ENCODE measurements at regions of chr5 and their contacts with region 1.

Region 1: GRCh38 chr5:181207214-181208107 is 2.5 kb upstream of the TRIM7 start:
- DNase-seq: peak; percentile 82 to 86
- H3K4me3 ChIP-seq: peak overlapping the region; percentile 69
- H3K27ac ChIP-seq: peak overlapping the region; percentile 56
- H3K4me1 ChIP-seq: peaks cover 12% of the 10 kb centered on the region
- H3K27me3 ChIP-seq: no peaks in the 10 kb centered on the region
- CTCF ChIP-seq: no peak

Region 2: GRCh38 chr5:180810210-180810958 is 397.1 kb before region 1 on chr5:
- CTCF ChIA-PET with region 1: no interaction called
- POLR2A ChIA-PET with region 1: interaction called, 15 read pairs
- intact Hi-C with region 1: no loop called
- DNase-seq: peak; percentile 80 to 96
- H3K4me3 ChIP-seq: peak overlapping the region; percentile 95
- H3K27ac ChIP-seq: peak overlapping the region; percentile 91
- H3K4me1 ChIP-seq: peaks cover 55% of the 10 kb centered on the region
- H3K27me3 ChIP-seq: no peaks in the 10 kb centered on the region
- CTCF ChIP-seq: no peak

Region 3: GRCh38 chr5:181217803-181218062 is 10.3 kb after region 1 on chr5:
- CTCF ChIA-PET with region 1: interaction called, 13 read pairs
- POLR2A ChIA-PET with region 1: interaction called, 8 read pairs
- intact Hi-C with region 1: loop called (anchors 1 kb)
- DNase-seq: peak in 1 of 2 experiments; percentile 54
- H3K4me3 ChIP-seq: peak overlapping the region; percentile 70
- H3K27ac ChIP-seq: peak overlapping the region; percentile 25
- H3K4me1 ChIP-seq: peaks cover 7% of the 10 kb centered on the region; the same call in 1 of the 2 replicates
- H3K27me3 ChIP-seq: no peaks in the 10 kb centered on the region
- CTCF ChIP-seq: no peak; the same call in 1 of the 2 replicates

Region 4: DNA sequence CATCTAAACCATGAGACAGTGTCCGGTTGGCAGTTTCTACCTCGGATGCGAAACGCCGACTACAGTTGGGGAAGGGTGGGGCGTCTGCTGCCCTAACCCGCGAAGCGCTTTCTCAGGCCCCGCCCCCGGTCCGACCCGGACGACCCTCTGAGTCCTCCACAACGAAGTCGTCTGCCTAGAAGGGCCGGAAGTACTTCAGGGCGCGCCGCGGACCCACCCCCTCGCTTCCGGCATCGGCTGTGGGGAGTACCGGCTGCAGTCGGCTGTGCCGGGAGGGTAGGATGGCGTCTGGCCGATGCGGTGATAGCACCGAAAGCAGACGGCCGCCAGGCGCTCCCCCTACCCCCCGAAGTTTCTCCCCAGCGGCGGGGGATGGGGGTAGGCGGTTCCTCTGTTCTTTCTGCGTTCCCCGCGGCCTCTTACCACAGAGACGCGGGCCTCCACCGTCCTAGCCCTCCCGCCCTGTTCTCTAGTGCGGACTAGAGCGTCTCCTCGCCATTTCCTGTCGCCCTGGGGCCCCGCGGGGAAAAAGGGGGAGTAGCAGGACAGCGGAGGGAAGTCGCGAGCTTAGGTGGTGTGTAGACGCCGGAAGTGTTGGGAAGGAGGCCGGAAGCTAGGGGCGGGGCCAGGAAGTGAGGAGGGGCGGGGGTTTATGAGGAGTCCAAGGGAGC is 15.7 kb after region 1 on chr5 and contains the start of gene TRIM41:
- CTCF ChIA-PET with region 1: no interaction called
- POLR2A ChIA-PET with region 1: interaction called, 18 read pairs
- intact Hi-C with region 1: loop called (anchors 1 kb)
- DNase-seq: peak; percentile 93 to 99
- H3K4me3 ChIP-seq: peak within 1 kb of the TSS; percentile 68
- H3K27ac ChIP-seq: peak within 1 kb of the TSS; percentile 89
- H3K4me1 ChIP-seq: peaks cover 15% of the 10 kb centered on the region; the same call in 1 of the 2 replicates
- H3K27me3 ChIP-seq: no peaks in the 10 kb centered on the region
- CTCF ChIP-seq: no peak
- total RNA-seq, gene TRIM41: 57.6 and 66.0 TPM in 2 replicates

Region 5: GRCh38 chr5:181260387-181261319 is 53.2 kb after region 1 on chr5 and contains the start of gene TRIM52:
- CTCF ChIA-PET with region 1: no interaction called
- POLR2A ChIA-PET with region 1: interaction called, 19 read pairs
- intact Hi-C with region 1: no loop called
- DNase-seq: peak; percentile 83 to 91
- H3K4me3 ChIP-seq: peak within 1 kb of the TSS; percentile 96
- H3K27ac ChIP-seq: peak within 1 kb of the TSS; percentile 66
- H3K4me1 ChIP-seq: peaks cover 36% of the 10 kb centered on the region
- H3K27me3 ChIP-seq: no peaks in the 10 kb centered on the region
- CTCF ChIP-seq: no peak
- total RNA-seq, gene TRIM52: 15.2 and 15.7 TPM in 2 replicates